Right cardiac atrium (tissue), 5 donors: ENCODE measurements at regions of chr17 and their contacts with region 1.

Region 1: DNA sequence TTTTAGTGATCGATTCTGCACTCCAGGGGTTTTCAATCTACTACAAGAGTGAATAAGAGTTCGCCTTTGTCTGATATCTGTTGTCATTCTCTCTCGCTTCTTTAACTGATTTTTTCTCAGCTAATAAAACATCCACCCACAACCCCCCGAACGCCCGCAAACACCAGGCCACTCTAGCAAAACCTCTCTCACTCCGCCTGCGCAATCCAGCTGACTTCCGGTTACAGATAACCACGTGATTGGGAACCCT is 338 bp upstream of the RPL19 start:
- DNase-seq: peak; percentile 91 to 95 (median 92)
- ATAC-seq: peak; percentile 78 to 80
- H3K4me3 ChIP-seq: peak overlapping the region; percentile 96
- H3K27ac ChIP-seq: peak overlapping the region; percentile 66
- H3K4me1 ChIP-seq: peaks cover 3% of the 10 kb centered on the region
- H3K27me3 ChIP-seq: no peaks in the 10 kb centered on the region

Region 2: DNA sequence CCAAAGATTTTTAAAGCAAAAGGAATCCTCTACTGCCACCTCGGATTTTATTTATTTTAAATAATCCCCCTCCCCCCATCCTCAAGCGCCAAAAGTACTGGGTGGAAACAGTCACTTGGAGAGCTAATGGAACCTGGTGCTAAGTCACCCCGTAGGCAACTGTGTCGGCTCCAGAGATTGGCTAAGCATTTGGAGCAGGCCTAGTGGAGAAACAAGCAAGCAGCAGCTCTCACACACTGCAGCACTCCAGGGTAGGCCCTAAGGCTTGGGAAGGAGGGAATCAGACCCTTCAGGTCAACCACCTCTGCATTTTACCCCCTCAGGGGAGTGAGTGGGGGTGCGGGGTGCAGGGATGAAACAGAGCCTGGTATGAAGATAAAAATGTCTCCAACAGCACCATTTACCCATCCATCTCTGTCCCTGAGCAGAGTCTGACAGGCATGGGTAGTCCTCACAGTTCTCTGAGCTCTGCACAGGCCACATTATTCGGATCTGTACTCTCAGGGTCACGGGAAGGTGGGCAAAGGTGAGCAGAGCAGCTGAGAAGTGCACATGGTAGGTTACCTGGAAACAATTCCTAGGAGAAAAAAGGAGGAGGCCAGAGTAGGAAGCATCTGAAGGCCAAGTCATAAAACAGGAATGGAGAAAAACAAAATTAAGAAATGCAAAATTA is 53.2 kb after region 1 on chr17:
- intact Hi-C with region 1: loop called in 1 of 4 experiments (anchors 10 kb)
- DNase-seq: no peak
- ATAC-seq: no peak
- H3K4me3 ChIP-seq: no peak overlapping the region
- H3K27ac ChIP-seq: no peak overlapping the region
- H3K4me1 ChIP-seq: no peaks in the 10 kb centered on the region
- H3K27me3 ChIP-seq: no peaks in the 10 kb centered on the region

Region 3: GRCh38 chr17:39408360-39408759 is 208.6 kb after region 1 on chr17:
- intact Hi-C with region 1: no loop called
- DNase-seq: no peak
- ATAC-seq: no peak
- H3K4me3 ChIP-seq: no peak overlapping the region
- H3K27ac ChIP-seq: no peak overlapping the region
- H3K4me1 ChIP-seq: no peaks in the 10 kb centered on the region
- H3K27me3 ChIP-seq: no peaks in the 10 kb centered on the region